Vagina (tissue), 2 donors: ENCODE measurements at regions of chr9 and their contacts with region 1.

Region 1: DNA sequence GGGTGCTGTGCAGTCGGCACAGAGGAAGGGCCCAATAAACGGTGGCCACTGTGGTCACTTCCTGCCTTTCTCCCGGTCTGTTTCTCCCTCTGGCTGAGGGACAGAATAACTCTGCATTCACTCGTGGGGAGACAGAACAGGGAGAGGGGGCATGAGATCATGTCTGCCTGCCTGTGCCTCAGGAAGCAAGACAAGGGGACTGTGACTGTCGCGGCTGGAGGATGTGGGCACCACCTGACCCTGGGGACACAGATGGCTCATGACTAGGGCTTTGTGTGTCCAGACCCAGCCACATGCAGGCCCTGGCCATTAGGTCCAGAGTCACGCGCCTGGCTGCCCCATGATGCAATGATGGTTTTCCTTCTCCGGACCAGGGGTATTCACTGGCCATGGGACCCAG is 5.8 kb downstream of the TRUB2 start:
- DNase-seq: no peak
- H3K4me3 ChIP-seq: no peak overlapping the region
- H3K27ac ChIP-seq: no peak overlapping the region
- H3K4me1 ChIP-seq: peaks cover 9% of the 10 kb centered on the region
- H3K27me3 ChIP-seq: no peaks in the 10 kb centered on the region
- CTCF ChIP-seq: no peak
- POLR2A ChIP-seq: no peak

Region 2: DNA sequence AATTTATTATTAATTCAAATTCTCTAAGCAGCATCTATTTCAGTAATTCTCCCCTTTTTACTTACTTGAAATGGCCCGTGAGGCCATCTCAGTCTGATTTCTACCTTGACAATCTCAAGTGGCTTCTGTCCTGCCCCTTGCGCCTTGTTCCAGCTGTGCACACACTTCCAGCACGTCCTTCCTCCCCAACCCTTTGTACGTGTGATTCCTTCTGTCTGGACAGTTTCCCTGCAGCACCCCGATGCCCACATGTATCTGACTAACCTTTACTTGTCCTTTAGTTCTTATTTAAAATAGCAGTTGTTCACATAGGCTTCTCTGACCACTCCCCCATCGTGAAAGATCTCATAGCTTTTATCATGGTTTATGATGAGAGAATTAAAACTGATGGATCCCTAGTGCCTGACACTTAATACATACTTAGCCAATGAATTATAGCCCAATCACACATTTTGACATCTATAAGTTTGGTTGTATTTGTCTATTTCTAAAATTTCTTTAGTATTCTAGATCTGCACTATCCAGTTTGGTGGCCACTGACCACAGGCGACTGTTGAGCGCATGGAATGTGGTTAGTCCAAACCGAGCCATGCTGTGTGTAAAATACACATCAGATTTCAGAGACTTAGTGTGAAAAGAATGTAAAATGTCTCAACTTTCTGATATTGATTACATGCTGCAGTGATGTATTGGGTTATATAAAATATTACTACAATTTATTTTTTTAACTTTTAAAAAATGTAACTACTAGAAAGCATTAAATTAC is 1441.7 kb before region 1 on chr9:
- intact Hi-C with region 1: loop called (anchors 5 kb)
- DNase-seq: peak in 1 of 2 donors; percentile 14
- H3K4me3 ChIP-seq: no peak overlapping the region
- H3K27ac ChIP-seq: no peak overlapping the region
- H3K4me1 ChIP-seq: no peaks in the 10 kb centered on the region
- H3K27me3 ChIP-seq: no peaks in the 10 kb centered on the region
- CTCF ChIP-seq: no peak
- POLR2A ChIP-seq: no peak

Region 3: DNA sequence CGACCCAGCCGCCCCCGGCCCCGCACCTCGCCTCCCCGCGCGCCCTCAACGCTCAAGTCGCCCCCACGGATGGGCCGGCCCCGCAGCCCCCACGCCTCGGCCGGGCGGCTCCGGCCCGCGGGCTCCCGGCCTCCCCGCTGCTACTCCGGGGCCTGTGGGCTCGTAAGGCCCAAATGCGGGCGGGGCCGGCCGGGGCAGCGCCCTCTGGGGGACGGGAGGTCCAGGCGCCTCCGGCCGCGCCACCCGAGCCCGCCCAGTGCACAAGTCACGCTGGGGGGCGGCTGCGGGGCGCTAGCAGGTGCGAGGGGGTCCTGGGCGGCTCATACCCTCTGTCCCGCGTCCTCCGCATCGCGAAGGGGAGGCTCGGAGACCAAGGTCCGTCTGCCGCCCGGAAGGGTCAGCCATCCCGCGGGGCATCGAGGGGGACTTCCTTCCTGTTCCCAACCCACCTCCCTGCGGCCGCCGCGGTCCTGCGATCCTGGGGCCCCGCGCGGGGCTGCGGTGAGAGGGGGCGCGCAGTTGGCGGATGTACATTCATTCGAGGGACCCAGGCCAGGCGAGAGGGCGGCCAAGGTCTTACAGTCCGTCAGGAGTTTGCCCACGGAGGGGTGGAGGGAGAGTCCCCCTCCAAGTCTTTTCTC is 124.9 kb before region 1 on chr9 and contains the start of gene CIZ1:
- intact Hi-C with region 1: no loop called
- DNase-seq: no peak
- H3K4me3 ChIP-seq: peak within 1 kb of the TSS; percentile 80 to 82
- H3K27ac ChIP-seq: peak within 1 kb of the TSS; percentile 93
- H3K4me1 ChIP-seq: peaks cover 36% of the 10 kb centered on the region
- H3K27me3 ChIP-seq: no peaks in the 10 kb centered on the region
- CTCF ChIP-seq: peak; percentile 43 to 73 (median 62)
- POLR2A ChIP-seq: peak in 1 of 2 donors; percentile 9
- total RNA-seq, gene CIZ1: 101 TPM